Caco-2 (cell line): ENCODE measurements at regions of chr6 and their contacts with region 1.

Region 1: GRCh38 chr6:130020907-130021629 is 2.7 kb downstream of the L3MBTL3 start:
- DNase-seq: peak; percentile 77 to 82
- H3K4me3 ChIP-seq: peak overlapping the region; percentile 80
- H3K4me3 Mint-ChIP-seq: peak overlapping the region; percentile 83
- H3K27ac Mint-ChIP-seq: peak overlapping the region; percentile 50
- H3K4me1 ChIP-seq: peaks cover 8% of the 10 kb centered on the region; the same call in 1 of the 2 replicates
- H3K4me1 Mint-ChIP-seq: no peaks in the 10 kb centered on the region
- H3K27me3 ChIP-seq: no peaks in the 10 kb centered on the region
- H3K27me3 Mint-ChIP-seq: no peaks in the 10 kb centered on the region
- CTCF ChIP-seq: peak; percentile 73 to 76

Region 2: GRCh38 chr6:129893640-129894039 is 127.4 kb before region 1 on chr6:
- CTCF ChIA-PET with region 1: no interaction called
- POLR2A ChIA-PET with region 1: no interaction called
- intact Hi-C with region 1: loop called (anchors 1 kb)
- DNase-seq: no peak
- H3K4me3 ChIP-seq: no peak overlapping the region
- H3K4me3 Mint-ChIP-seq: no peak overlapping the region
- H3K27ac Mint-ChIP-seq: no peak overlapping the region
- H3K4me1 ChIP-seq: no peaks in the 10 kb centered on the region
- H3K4me1 Mint-ChIP-seq: no peaks in the 10 kb centered on the region
- H3K27me3 ChIP-seq: no peaks in the 10 kb centered on the region
- H3K27me3 Mint-ChIP-seq: no peaks in the 10 kb centered on the region
- CTCF ChIP-seq: peak; percentile 26 to 40

Region 3: DNA sequence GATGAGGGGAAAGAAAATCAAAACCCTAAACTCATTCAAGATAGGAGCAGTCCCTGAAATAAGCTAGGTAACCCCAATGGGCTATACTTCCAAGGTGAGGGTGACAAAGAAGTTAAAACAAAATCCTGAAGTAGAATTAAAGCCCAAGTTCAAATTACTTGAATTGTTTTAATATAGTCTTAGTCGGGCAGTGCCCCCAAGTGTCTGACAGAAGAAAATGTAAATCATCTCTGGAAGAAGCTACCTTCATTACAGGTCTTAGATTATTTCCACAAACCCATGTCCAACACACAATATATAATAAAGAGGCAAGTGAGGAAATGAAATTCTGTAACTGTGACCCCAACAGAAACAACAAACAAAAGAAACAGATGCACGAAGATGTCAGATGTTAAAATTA is 39.5 kb before region 1 on chr6:
- CTCF ChIA-PET with region 1: interaction called, 6 read pairs
- POLR2A ChIA-PET with region 1: no interaction called
- intact Hi-C with region 1: loop called (anchors 1 kb)
- DNase-seq: no peak
- H3K4me3 ChIP-seq: no peak overlapping the region
- H3K4me3 Mint-ChIP-seq: no peak overlapping the region
- H3K27ac Mint-ChIP-seq: no peak overlapping the region
- H3K4me1 ChIP-seq: no peaks in the 10 kb centered on the region
- H3K4me1 Mint-ChIP-seq: no peaks in the 10 kb centered on the region
- H3K27me3 ChIP-seq: no peaks in the 10 kb centered on the region
- H3K27me3 Mint-ChIP-seq: no peaks in the 10 kb centered on the region
- CTCF ChIP-seq: peak; percentile 23 to 31